ENCODE measurements at regions of chrX and their contacts with region 1.

Region 1: DNA sequence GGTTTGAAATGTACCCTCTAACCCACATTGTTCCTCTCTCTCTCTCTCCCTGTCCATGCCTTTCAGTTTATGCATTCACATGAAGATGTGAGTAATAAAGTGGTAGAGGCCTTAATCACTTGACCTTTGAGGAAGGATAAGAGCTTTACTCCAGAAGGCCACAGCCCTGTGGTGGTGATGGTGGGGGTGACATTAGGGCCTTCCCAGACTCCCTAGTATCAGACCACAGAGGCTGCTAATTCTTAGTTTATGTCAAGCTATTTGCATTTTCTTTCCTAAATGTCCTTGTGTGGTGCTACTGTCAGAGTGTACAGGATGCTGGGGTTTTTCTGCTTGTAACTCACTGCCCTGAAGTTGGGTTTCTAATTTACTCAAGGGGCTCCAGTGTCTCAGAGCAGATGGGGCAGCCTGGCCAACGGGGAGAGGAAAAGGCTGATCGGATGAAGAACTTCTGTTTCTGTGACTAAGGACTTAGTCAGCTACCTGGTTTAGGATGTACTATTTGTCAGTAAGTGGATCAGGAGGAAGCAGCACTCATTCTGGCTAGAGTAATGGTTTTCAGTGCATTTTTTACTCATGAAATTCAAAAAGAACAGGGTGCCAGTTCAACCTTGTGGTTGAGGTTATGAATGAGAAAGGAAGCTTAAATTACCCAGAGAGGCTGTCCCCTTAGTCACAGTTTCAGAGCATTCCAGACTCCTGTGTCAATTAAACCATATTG is 509.6 kb upstream of the DIPK2B start:
- DNase-seq: peak; percentile 99
- H3K4me3 ChIP-seq: no peak overlapping the region
- H3K27ac ChIP-seq: peak overlapping the region; percentile 93
- H3K4me1 ChIP-seq: peaks cover 54% of the 10 kb centered on the region
- H3K27me3 ChIP-seq: no peaks in the 10 kb centered on the region
- CTCF ChIP-seq: no peak

Region 2: DNA sequence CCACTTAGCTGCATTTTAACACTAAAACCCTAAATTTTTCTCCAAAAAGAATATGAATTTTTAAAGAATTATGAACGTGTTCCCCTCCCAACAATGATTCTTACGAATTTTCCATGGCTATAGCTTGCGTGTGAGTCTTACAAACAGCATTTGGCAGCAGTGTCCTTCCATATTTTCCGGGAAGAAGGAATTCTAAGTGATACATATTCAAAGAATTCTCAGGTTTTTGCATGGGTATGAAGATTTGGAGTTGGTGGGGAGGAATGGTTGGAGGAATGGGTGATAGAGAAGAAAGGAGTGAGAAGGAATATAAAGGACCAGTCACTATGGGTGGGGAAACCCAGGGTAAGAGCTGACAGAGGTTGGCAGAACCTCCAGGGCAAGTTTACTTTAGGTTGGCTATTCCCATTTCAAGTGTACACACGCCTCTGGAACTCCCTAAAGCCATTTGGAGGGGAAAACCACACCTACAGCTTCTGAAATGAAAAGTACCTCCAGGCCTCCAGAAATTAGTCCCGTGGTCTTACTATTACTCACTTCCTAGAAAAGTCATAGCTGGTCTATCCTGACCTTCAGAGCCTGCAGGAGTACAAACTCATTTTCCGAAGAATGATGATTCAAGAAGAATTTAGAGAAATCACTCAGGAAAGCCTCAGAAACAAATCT is 88.7 kb before region 1 on chrX:
- CTCF ChIA-PET with region 1: no interaction called
- dilution Hi-C with region 1: no loop called
- in situ Hi-C with region 1: no loop called
- intact Hi-C with region 1: loop called (anchors 1 kb)
- DNase-seq: peak; percentile 96
- H3K4me3 ChIP-seq: no peak overlapping the region
- H3K27ac ChIP-seq: peak overlapping the region; percentile 68
- H3K4me1 ChIP-seq: peaks cover 36% of the 10 kb centered on the region
- H3K27me3 ChIP-seq: no peaks in the 10 kb centered on the region
- CTCF ChIP-seq: no peak

Measured in mammary epithelial cell (primary cell).